ENCODE measurements at regions of chr18 and their contacts with region 1.

Region 1: GRCh38 chr18:59996370-59996966 is 96.7 kb downstream of the PMAIP1 start:
- DNase-seq: peak; percentile 21
- H3K4me3 ChIP-seq: no peak overlapping the region
- H3K27ac ChIP-seq: no peak overlapping the region
- H3K4me1 ChIP-seq: no peaks in the 10 kb centered on the region
- H3K27me3 ChIP-seq: no peaks in the 10 kb centered on the region
- CTCF ChIP-seq: peak; percentile 43 to 56 (median 50)
- EP300 ChIP-seq: no peak
- POLR2A ChIP-seq: no peak

Region 2: DNA sequence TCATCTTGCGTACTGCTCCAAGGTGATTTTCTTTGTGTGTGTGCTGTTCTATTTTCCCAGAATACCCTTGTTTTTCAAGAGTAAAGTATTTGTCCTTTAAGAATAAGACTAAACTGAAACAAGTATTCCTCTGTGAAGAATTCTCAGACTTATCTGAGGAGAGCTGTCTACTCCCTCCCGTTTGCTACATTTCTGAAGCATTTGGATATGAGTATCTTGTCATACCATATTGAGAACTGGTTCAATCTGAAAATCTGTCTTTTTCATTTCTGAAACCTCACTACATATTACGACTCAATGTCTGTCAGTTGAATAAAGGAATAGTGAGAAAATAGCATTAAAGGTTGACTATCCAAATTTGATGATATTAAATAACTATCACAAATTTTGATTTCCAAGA is 62.7 kb after region 1 on chr18:
- in situ Hi-C with region 1: no loop called
- intact Hi-C with region 1: loop called (anchors 2 kb)
- DNase-seq: no peak
- H3K4me3 ChIP-seq: no peak overlapping the region
- H3K27ac ChIP-seq: no peak overlapping the region
- H3K4me1 ChIP-seq: no peaks in the 10 kb centered on the region
- H3K27me3 ChIP-seq: no peaks in the 10 kb centered on the region
- CTCF ChIP-seq: no peak
- EP300 ChIP-seq: no peak
- POLR2A ChIP-seq: no peak

Region 3: DNA sequence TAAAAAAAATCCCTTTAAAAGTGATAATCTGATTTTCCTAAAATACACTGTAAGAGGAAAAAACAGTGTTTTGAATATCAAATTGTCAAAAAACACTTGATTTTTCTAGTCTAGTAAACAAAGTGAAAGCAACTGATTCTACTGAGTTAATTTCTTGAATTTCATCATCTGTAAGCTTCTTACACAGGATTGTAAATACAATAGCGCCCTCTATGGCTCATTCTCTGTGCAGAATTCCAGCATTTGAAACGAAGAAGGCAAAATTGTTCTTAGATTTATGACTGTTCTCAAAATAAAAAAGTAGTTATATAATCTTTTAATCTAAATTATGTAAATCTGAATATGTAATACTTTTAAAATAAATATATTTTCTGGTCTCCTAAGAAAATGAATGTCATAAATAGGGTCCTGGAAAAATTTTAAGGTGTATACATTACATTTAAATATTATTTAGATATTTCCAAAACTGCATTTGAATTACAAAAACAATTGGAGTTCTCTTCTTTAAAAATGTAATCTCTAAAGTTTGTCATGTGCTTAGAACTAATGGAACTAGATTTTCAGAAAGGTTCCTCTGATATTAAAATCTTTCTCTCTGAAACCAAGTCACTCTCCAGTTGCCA is 553.0 kb after region 1 on chr18:
- in situ Hi-C with region 1: loop called in 2 of 4 experiments (anchors 25 kb)
- intact Hi-C with region 1: loop called (anchors 10 kb)
- DNase-seq: no peak
- H3K4me3 ChIP-seq: no peak overlapping the region
- H3K27ac ChIP-seq: no peak overlapping the region
- H3K4me1 ChIP-seq: no peaks in the 10 kb centered on the region
- H3K27me3 ChIP-seq: no peaks in the 10 kb centered on the region
- CTCF ChIP-seq: peak; percentile 56 to 70 (median 62)
- EP300 ChIP-seq: no peak
- POLR2A ChIP-seq: no peak

Measured in transverse colon (tissue), 4 donors.